Dorsolateral prefrontal cortex (tissue), 120 donors: ENCODE measurements at regions of chr19 and their contacts with region 1.

Region 1: GRCh38 chr19:488505-489417 is 7.5 kb upstream of the MADCAM1 start:
- DNase-seq: peak; percentile 90 to 97 (median 94)
- H3K4me3 ChIP-seq: peak overlapping the region; percentile 45 to 97 (median 88)
- H3K27ac ChIP-seq: peak overlapping the region; percentile 79 to 100 (median 98)
- H3K27me3 ChIP-seq: peaks cover 0 to 4% (median 0%) of the 10 kb centered on the region in 45 donors
- CTCF ChIP-seq: peak in 42 of 56 donors; percentile 6 to 61 (median 36)

Region 2: DNA sequence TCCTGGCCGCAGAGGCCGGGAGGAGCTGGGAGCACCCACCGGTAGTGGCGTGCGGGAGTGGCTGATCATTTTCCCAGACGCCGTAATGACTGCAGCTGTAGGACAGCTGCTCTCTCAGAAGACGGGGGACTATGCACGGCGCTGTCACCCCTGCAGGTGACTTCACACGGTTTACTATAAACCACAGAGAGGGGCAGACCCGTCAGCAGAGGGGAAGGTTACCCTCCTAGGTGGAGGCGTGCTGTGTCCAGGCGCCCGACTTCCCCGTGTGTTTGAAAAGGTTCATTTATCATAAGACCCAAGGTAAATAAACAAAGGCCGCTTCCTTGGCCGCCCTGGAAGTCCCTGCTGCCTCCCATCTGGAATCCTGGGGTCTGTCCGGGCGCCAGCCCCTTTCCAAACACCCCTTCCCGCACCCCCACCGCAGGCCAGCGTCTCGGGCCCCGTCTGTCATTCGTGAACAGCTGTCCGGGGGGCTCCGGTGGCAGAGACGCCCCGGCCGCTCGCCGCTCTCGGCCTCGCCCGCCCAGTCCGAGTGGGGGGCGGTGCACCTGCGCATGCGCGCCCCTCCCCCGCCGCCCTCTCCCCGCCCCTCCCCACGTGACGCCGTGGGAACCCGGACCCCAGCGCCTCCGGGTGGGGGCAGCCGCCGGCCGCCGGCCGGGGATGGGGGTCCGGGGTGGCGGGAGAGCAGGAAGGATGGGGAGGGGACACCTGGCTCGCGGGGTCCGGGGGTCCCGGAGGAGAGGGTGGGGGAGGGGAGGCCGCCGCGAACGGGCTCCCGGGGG is 28.8 kb before region 1 on chr19:
- intact Hi-C with region 1: loop called in 1 of 2 experiments (anchors 2 kb)
- DNase-seq: peak; percentile 52 to 86 (median 66)
- H3K4me3 ChIP-seq: peak overlapping the region; percentile 49 to 95 (median 79)
- H3K27ac ChIP-seq: peak overlapping the region in 58 of 59 donors; percentile 37 to 96 (median 89)
- H3K27me3 ChIP-seq: no peaks in the 10 kb centered on the region
- CTCF ChIP-seq: peak in 13 of 56 donors; percentile 6 to 40 (median 15)

Region 3: GRCh38 chr19:588093-588740 is 99.5 kb after region 1 on chr19:
- intact Hi-C with region 1: no loop called
- DNase-seq: peak; percentile 64 to 95 (median 91)
- H3K4me3 ChIP-seq: peak overlapping the region in 54 of 59 donors; percentile 1 to 66 (median 44)
- H3K27ac ChIP-seq: peak overlapping the region; percentile 64 to 98 (median 95)
- H3K27me3 ChIP-seq: peaks cover 0 to 14% (median 0%) of the 10 kb centered on the region in 45 donors
- CTCF ChIP-seq: peak; percentile 44 to 87 (median 72)